ENCODE measurements at regions of chr7 and their contacts with region 1.

Region 1: DNA sequence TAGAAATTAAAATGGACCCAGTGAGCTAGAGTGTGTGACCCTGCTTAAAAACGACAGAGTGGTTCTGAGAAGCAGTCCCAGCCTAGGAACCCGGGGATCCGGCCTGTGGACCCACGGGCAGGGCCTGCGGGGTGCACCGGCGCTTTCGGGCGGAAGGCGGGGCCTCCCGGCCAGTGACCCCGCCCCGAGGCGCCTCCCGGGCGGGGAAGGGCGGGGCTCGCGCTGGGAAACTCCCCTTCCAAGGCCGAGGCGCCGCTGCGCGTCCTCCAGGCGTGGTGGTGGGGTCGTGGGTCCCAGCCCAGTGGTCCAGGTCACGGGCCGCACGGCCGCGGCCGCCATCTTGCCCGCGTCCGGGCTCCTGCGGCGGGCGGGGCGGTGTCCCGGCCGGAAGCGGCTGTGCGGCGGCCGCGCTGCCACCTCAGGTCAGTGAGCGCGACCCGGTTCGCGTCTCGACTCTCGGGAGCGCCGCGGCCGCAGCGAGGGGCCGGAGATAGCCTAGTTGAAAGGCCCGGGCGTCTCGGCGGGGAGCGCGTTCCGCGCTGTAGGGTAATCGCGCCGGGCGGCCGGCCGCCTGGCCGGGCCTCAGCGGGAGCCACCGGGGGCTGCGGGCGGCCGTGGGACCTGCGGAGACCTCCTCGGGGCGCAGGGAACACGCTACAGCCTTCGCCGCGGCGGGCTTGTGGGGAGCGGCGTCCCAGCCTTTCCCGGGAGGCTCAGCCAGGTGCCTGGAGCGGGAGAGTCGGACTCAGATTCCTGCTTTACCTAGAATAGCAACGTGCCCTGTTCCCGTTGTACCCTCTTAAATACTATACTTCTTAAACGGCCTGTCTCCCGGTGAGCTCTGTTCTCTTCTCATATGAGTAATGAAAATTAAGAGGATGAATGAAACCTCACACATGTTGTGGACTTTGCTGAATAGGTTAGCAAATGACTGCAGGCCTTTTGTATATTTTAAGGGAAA is at the start of gene MIOS:
- DNase-seq: peak; percentile 89 to 90
- ATAC-seq: peak; percentile 66 to 67
- H3K4me3 ChIP-seq: peak within 1 kb of the TSS; percentile 67 to 85 (median 80)
- H3K27ac ChIP-seq: peak within 1 kb of the TSS; percentile 90 to 98 (median 96)
- H3K4me1 ChIP-seq: peaks cover 33 to 76% of the 10 kb centered on the region in 2 donors
- H3K27me3 ChIP-seq: no peaks in the 10 kb centered on the region
- CTCF ChIP-seq: peak in 1 of 5 experiments; percentile 18
- POLR2A ChIP-seq: peak; percentile 82 to 92
- total RNA-seq, gene MIOS: 68.4 to 336 (median 280) TPM

Region 2: DNA sequence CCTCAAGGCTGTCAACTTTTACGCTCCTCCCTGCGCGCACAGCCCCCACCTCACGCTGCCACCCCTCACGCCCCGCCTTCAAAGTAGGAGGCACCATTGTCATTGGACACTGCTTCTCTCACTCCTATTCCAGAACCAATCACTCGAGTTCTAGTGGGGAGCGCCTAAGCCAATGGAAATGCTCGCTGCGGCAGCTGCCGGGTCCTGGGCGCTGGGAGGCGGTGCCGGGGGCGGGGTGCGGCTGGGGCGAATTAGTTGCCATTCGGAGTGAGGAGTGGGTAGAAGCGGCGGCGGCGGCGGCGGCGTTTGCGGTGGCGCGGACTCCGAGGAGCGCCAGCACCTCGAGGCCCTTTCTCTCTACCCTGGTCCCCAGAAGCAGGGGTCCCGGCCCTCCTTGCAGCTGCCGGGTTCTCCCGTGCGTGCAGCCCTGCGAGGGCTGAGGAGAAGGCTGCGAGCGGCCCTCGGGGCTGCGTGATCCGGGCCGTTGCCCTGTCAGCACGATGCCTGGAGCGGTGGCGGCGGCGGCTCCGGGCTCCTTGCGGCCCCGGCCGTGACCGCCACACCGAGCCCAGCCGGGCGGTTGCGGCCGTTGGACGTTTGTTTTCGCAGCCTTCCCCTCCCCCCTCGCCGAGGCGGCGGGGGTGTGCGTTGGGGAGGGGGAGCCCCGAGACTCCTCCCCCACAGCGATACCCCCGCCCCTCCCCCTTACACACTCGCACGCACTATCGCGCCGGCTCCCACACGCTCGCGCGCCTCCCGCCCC is 401.8 kb after region 1 on chr7 and contains the start of gene GLCCI1:
- in situ Hi-C with region 1: no loop called
- intact Hi-C with region 1: loop called (anchors 10 kb)
- DNase-seq: peak; percentile 97
- ATAC-seq: peak; percentile 96 to 97
- H3K4me3 ChIP-seq: peak within 1 kb of the TSS; percentile 83 to 93 (median 86)
- H3K27ac ChIP-seq: peak within 1 kb of the TSS; percentile 91 to 98 (median 93)
- H3K4me1 ChIP-seq: peaks cover 13 to 22% of the 10 kb centered on the region in 2 donors
- H3K27me3 ChIP-seq: no peaks in the 10 kb centered on the region
- CTCF ChIP-seq: no peak
- POLR2A ChIP-seq: peak; percentile 79 to 95
- total RNA-seq, gene GLCCI1: 1.2 to 6.1 (median 2.6) TPM